ENCODE measurements at regions of chr1 and their contacts with region 1.

Region 1: GRCh38 chr1:27725374-27726173 is at the start of gene FAM76A:
- DNase-seq: peak; percentile 99
- H3K4me3 ChIP-seq: peak within 1 kb of the TSS; percentile 96 to 98
- H3K27ac ChIP-seq: peak within 1 kb of the TSS; percentile 90 to 93
- H3K4me1 ChIP-seq: no peaks in the 10 kb centered on the region
- H3K27me3 ChIP-seq: no peaks in the 10 kb centered on the region
- CTCF ChIP-seq: peak in 3 of 4 experiments; percentile 48 to 76 (median 59)
- POLR2A ChIP-seq: peak; percentile 63
- total RNA-seq, gene FAM76A: 7.8 to 18.5 TPM

Region 2: DNA sequence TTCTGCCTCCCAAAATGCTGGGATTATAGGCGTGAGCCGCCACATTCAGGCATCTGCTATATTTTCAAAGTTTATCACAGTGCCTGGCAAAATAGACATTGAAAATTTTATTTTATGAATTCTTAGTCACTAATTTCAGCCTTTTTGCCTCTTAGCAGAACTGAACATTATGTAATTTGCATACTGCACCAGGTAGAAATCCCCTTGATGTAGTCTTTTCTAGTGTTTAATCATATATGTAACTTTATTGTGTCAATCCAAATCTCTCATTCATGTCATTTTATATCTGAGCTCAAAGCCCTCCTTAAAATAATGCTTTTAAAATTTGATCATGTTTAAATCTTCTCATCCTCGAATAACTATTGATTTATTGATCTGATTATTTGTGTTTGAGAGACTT is 472.0 kb before region 1 on chr1:
- intact Hi-C with region 1: no loop called
- DNase-seq: no peak
- H3K4me3 ChIP-seq: no peak overlapping the region
- H3K27ac ChIP-seq: no peak overlapping the region
- H3K4me1 ChIP-seq: no peaks in the 10 kb centered on the region
- H3K27me3 ChIP-seq: no peaks in the 10 kb centered on the region
- CTCF ChIP-seq: no peak
- POLR2A ChIP-seq: no peak

Region 3: GRCh38 chr1:27659497-27660299 is 65.9 kb before region 1 on chr1:
- intact Hi-C with region 1: no loop called
- DNase-seq: peak; percentile 84
- H3K4me3 ChIP-seq: peak overlapping the region; percentile 48 to 59
- H3K27ac ChIP-seq: peak overlapping the region; percentile 84 to 88
- H3K4me1 ChIP-seq: no peaks in the 10 kb centered on the region
- H3K27me3 ChIP-seq: no peaks in the 10 kb centered on the region
- CTCF ChIP-seq: peak in 2 of 4 experiments; percentile 8 to 41
- POLR2A ChIP-seq: peak; percentile 64

Region 4: DNA sequence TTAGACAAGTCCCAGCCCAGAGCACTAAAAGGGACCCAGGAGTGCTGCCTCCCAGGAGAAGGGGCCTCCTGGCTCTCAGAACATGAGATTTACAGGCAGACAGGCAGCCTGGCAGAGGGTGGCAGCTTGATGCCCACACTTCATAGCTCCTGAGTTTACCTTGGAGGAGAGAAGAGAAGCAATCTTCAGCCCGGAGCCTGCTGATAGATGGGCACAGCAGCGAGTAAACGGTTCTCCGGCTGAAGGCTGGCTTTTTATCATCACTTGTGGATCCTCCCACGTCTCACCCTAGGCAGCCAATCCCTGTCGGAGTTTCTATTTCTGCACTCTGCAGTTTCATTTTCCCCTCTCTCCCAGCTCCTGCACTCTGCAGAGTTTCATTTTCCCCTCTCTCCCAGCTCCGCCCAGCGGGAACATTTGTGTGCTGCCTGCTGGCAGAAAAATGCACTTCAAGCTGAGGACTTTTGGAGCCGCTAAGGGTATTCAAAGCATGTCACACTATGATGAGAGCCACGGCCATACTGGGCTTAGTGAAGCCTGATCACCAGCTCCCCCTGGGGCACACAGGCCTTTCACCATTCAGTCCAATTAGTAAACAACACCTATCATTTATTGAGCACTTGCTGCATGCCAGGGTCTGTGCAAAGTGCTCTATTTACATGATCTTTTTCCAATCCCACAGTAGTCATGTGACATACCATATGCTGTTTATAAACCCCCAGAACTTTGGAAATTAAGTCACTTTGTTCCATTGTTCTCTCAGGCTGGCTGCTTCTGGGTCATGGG is 53.4 kb before region 1 on chr1 and contains the start of gene IFI6:
- intact Hi-C with region 1: loop called (anchors 1 kb)
- DNase-seq: peak; percentile 87
- H3K4me3 ChIP-seq: peak within 1 kb of the TSS; percentile 32 to 37
- H3K27ac ChIP-seq: peak within 1 kb of the TSS; percentile 80 to 86
- H3K4me1 ChIP-seq: peaks cover 6% of the 10 kb centered on the region
- H3K27me3 ChIP-seq: no peaks in the 10 kb centered on the region
- CTCF ChIP-seq: peak in 3 of 4 experiments; percentile 21 to 56 (median 54)
- POLR2A ChIP-seq: peak; percentile 45
- total RNA-seq, gene IFI6: 40.4 to 274 TPM

Region 5: DNA sequence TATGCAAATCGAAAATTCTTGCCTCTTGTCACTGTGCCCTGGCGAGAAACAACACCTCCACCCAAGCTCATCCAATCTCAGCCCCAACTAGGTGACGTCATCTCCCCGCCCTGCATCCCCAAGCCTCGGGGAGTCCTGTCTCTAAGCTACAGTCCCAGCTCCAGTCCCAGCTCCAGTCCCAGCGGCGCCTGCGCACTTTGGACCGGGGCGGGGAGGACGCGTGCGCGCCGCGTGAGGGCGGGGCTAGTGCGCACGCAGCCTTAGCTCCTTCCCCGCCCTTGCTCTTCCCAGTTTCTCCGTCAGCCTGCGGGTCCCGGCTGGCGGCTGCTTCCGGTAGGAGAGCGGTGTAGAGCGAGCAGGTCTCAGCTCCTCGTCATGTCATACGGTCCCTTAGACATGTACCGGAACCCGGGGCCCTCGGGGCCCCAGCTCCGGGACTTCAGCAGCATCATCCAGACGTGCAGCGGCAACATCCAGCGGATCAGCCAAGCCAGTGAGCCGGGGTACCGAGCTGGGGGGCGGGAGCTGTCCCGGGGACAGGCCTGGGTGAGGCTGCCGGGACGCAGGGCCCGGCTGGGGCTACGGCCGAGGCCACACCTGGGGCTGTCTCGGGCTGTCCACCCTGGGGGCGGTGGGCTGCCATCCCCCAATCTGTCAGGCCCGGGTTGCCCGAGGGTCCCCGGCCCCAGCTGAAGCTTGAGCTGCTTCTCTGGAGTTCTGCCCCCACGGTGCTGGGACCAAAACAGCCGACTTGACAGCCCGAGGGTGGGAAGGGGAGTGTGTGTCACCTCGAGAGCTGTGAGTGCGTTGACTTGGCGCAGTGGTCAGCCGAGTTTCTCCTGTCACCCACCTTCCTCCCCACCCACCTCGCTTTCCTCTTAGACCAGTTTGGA is 47.6 kb after region 1 on chr1 and contains the start of gene STX12:
- intact Hi-C with region 1: loop called (anchors 5 kb)
- DNase-seq: peak; percentile 97
- H3K4me3 ChIP-seq: peak within 1 kb of the TSS; percentile 97
- H3K27ac ChIP-seq: peak within 1 kb of the TSS; percentile 91 to 94
- H3K4me1 ChIP-seq: no peaks in the 10 kb centered on the region
- H3K27me3 ChIP-seq: no peaks in the 10 kb centered on the region
- CTCF ChIP-seq: no peak
- POLR2A ChIP-seq: peak; percentile 95
- total RNA-seq, gene STX12: 53.1 to 64.9 TPM

Region 6: GRCh38 chr1:28456078-28456477 is 730.5 kb after region 1 on chr1:
- intact Hi-C with region 1: no loop called
- DNase-seq: no peak
- H3K4me3 ChIP-seq: no peak overlapping the region
- H3K27ac ChIP-seq: no peak overlapping the region
- H3K4me1 ChIP-seq: no peaks in the 10 kb centered on the region
- H3K27me3 ChIP-seq: no peaks in the 10 kb centered on the region
- CTCF ChIP-seq: no peak
- POLR2A ChIP-seq: no peak

Measured in prostate gland (tissue), 2 donors.